Right ventricle myocardium inferior (tissue), 1 donor: ENCODE measurements at regions of chr2 and their contacts with region 1.

Region 1: GRCh38 chr2:172102391-172103278 is at the start of gene DLX2:
- DNase-seq: peak; percentile 91
- ATAC-seq: peak; percentile 64
- total RNA-seq, gene DLX2: not detected

Region 2: GRCh38 chr2:171574149-171574795 is 528.4 kb before region 1 on chr2:
- intact Hi-C with region 1: loop called (anchors 10 kb)
- DNase-seq: peak; percentile 94
- ATAC-seq: peak; percentile 91

Region 3: DNA sequence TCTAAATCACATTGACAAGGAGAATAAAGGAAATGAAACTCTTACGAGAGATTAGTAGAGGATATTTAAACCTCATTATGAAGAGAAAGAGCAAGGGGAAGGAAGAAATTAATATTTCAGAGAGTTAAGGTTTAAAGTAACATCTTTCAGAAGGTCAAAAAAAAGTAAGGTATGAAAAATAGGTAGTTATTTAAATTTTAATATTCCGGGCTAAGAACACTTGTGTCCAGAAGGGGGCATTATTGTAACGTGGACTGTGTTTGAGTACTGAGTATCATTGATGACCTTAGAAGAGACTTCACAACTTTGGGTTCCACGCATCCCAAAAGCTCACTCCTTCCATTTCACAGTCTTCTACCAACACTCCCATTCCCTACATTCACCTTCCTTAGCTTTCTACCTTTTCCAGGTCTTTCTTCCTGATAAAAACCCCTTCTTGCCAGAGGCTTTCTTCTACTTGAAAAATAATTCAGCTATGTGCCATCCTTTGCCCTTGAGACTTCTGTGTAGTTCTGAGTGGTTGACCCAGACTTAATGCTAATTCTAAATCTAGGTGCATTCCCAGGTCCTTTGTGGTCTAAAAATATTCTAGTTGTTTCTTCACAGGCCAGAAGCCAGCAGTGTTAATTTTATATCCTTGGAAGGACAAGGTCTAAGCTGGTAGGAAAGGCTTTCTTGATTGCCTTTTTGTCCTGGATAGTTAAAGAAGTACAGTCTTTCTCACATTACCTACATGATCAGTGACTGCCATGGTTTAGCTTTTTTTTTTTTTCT is 398.9 kb before region 1 on chr2:
- intact Hi-C with region 1: loop called (anchors 5 kb)
- DNase-seq: no peak
- ATAC-seq: peak; percentile 37

Region 4: DNA sequence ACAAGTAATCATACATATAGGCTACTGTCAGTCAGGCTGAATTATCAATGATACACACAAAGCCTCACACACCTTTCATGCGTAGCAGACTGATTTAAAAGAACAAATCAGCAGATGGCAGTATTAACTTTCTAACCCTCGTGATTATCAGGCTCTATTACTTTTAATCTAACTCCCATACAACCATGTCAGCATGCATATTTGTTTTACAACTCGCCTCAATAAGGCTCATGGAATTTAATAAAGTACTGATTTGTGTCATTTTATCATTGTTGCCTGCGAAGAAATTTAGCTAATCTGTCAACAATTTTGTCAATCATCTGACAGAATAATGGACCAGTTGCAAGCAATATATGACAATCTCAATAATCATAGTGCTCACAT is 291.4 kb before region 1 on chr2:
- intact Hi-C with region 1: loop called (anchors 5 kb)
- DNase-seq: no peak
- ATAC-seq: peak; percentile 35

Region 5: GRCh38 chr2:172196768-172197431 is 94.3 kb after region 1 on chr2:
- intact Hi-C with region 1: no loop called
- DNase-seq: no peak
- ATAC-seq: no peak